ENCODE measurements at regions of chr7 and their contacts with region 1.

Region 1: GRCh38 chr7:101882595-101883564 is 65.5 kb downstream of the CUX1 start:
- DNase-seq: peak; percentile 92
- H3K4me3 ChIP-seq: peak overlapping the region; percentile 13; the same call in 1 of the 2 replicates
- H3K4me3 Mint-ChIP-seq: peak overlapping the region; percentile 66
- H3K27ac Mint-ChIP-seq: peak overlapping the region; percentile 96
- H3K4me1 ChIP-seq: peaks cover 63% of the 10 kb centered on the region
- H3K4me1 Mint-ChIP-seq: peaks cover 62% of the 10 kb centered on the region
- H3K27me3 ChIP-seq: no peaks in the 10 kb centered on the region
- H3K27me3 Mint-ChIP-seq: no peaks in the 10 kb centered on the region
- CTCF ChIP-seq: peak in 1 of 2 experiments; percentile 21

Region 2: GRCh38 chr7:101586078-101586905 is 296.6 kb before region 1 on chr7:
- CTCF ChIA-PET with region 1: no interaction called
- POLR2A ChIA-PET with region 1: no interaction called
- intact Hi-C with region 1: loop called (anchors 1 kb)
- DNase-seq: peak; percentile 72 to 89
- H3K4me3 ChIP-seq: no peak overlapping the region
- H3K4me3 Mint-ChIP-seq: peak overlapping the region; percentile 44
- H3K27ac Mint-ChIP-seq: peak overlapping the region; percentile 74
- H3K4me1 ChIP-seq: peaks cover 56% of the 10 kb centered on the region
- H3K4me1 Mint-ChIP-seq: peaks cover 48% of the 10 kb centered on the region
- H3K27me3 ChIP-seq: no peaks in the 10 kb centered on the region
- H3K27me3 Mint-ChIP-seq: no peaks in the 10 kb centered on the region
- CTCF ChIP-seq: peak in 1 of 2 experiments; percentile 28

Region 3: DNA sequence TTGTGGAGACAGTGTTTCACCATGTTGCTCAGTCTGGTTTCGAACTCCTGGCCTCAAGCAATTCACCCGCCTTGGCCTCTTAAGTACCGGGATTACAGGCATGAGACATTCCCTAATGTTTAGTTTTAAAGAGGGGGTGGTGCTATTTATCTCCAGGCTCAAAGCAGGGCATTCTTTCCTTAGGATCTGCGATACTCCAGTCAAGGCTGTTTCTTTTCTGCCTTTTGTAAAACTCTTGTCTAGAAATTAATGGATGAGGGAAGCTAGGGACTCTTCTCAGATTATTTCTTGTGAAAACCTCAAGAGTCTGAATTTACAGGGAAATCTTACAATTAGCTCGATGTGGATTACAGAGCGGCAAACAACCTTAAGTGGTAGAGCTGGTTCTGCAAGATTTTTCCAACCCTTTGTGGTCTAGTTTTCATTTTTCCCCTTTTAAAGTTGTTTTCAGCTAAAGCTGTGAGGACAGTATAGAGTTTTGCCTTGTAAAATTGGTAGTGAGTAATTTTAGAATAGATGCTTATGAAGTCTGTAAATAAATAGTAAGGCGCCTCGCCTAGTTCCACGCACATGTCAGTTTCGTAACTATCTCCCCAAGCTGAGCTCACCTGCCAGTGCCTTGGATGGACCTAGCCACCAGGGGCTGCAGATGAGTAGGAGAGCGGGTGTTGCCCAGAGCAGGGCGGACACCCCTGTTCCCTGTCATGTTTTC is 12.4 kb before region 1 on chr7:
- CTCF ChIA-PET with region 1: interaction called, 7 read pairs
- POLR2A ChIA-PET with region 1: no interaction called
- intact Hi-C with region 1: loop called (anchors 1 kb)
- DNase-seq: peak; percentile 81
- H3K4me3 ChIP-seq: no peak overlapping the region
- H3K4me3 Mint-ChIP-seq: peak overlapping the region; percentile 75
- H3K27ac Mint-ChIP-seq: peak overlapping the region; percentile 91
- H3K4me1 ChIP-seq: peaks cover 35% of the 10 kb centered on the region
- H3K4me1 Mint-ChIP-seq: peaks cover 55% of the 10 kb centered on the region
- H3K27me3 ChIP-seq: no peaks in the 10 kb centered on the region
- H3K27me3 Mint-ChIP-seq: no peaks in the 10 kb centered on the region
- CTCF ChIP-seq: peak; percentile 51 to 71

Region 4: GRCh38 chr7:101924171-101924570 is 41.3 kb after region 1 on chr7:
- CTCF ChIA-PET with region 1: no interaction called
- POLR2A ChIA-PET with region 1: no interaction called
- intact Hi-C with region 1: loop called (anchors 1 kb)
- DNase-seq: no peak
- H3K4me3 ChIP-seq: no peak overlapping the region
- H3K4me3 Mint-ChIP-seq: no peak overlapping the region
- H3K27ac Mint-ChIP-seq: peak overlapping the region; percentile 96
- H3K4me1 ChIP-seq: peaks cover 23% of the 10 kb centered on the region
- H3K4me1 Mint-ChIP-seq: peaks cover 31% of the 10 kb centered on the region
- H3K27me3 ChIP-seq: no peaks in the 10 kb centered on the region
- H3K27me3 Mint-ChIP-seq: no peaks in the 10 kb centered on the region
- CTCF ChIP-seq: no peak

Measured in Caco-2 (cell line).